H1 (cell line): ENCODE measurements at regions of chr4 and their contacts with region 1.

Region 1: GRCh38 chr4:5125321-5125720 is 74.0 kb downstream of the STK32B start:
- DNase-seq: no peak
- H3K4me3 ChIP-seq: no peak overlapping the region
- H3K27ac ChIP-seq: no peak overlapping the region
- H3K4me1 ChIP-seq: peaks cover 0 to 2% (median 0%) of the 10 kb centered on the region in 4 experiments; a peak in 1 of 7 replicates
- H3K27me3 ChIP-seq: no peaks in the 10 kb centered on the region; a peak in 2 of 7 replicates
- CTCF ChIP-seq: no peak
- EP300 ChIP-seq: no peak
- POLR2A ChIP-seq: no peak
- RAD21 ChIP-seq: no peak

Region 2: DNA sequence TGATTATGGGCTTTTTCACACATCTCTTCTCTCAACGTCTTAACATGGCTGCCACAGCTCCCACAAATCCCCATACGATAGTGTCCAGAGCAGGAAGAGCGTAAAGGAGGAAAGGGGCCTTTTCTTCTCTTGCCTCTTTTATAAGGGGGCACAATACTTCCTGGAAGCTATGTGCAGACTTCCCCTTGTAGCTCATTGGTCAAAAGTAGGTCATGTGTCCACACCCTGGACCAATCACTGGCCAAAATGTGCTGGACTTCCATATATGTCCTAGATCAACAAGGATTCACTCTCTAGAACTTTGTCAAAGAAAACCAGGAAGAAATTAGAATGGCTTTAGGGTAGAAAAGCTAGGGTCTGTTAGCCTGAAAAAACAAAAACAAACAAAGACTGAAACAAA is 47.3 kb before region 1 on chr4:
- CTCF ChIA-PET with region 1: no interaction called
- POLR2A ChIA-PET with region 1: no interaction called
- DNase-seq: no peak
- H3K4me3 ChIP-seq: no peak overlapping the region
- H3K27ac ChIP-seq: no peak overlapping the region
- H3K4me1 ChIP-seq: 0 out of 7 replicates have a peak, but pooled peaks cover 0 to 3% (median 0%) of the 10 kb centered on the region in 4 experiments
- H3K27me3 ChIP-seq: no peaks in the 10 kb centered on the region
- CTCF ChIP-seq: no peak
- EP300 ChIP-seq: no peak
- POLR2A ChIP-seq: no peak
- RAD21 ChIP-seq: no peak

Region 3: GRCh38 chr4:5137927-5138326 is 12.6 kb after region 1 on chr4:
- CTCF ChIA-PET with region 1: interaction called, 12 read pairs
- POLR2A ChIA-PET with region 1: interaction called, 3 read pairs
- DNase-seq: no peak
- H3K4me3 ChIP-seq: no peak overlapping the region
- H3K27ac ChIP-seq: no peak overlapping the region
- H3K4me1 ChIP-seq: peaks cover 0 to 15% (median 7%) of the 10 kb centered on the region in 4 experiments; a peak in 4 of 7 replicates
- H3K27me3 ChIP-seq: no peaks in the 10 kb centered on the region
- CTCF ChIP-seq: no peak
- EP300 ChIP-seq: no peak
- POLR2A ChIP-seq: no peak
- RAD21 ChIP-seq: no peak